A673 (cell line): ENCODE measurements at regions of chr10 and their contacts with region 1.

Region 1: DNA sequence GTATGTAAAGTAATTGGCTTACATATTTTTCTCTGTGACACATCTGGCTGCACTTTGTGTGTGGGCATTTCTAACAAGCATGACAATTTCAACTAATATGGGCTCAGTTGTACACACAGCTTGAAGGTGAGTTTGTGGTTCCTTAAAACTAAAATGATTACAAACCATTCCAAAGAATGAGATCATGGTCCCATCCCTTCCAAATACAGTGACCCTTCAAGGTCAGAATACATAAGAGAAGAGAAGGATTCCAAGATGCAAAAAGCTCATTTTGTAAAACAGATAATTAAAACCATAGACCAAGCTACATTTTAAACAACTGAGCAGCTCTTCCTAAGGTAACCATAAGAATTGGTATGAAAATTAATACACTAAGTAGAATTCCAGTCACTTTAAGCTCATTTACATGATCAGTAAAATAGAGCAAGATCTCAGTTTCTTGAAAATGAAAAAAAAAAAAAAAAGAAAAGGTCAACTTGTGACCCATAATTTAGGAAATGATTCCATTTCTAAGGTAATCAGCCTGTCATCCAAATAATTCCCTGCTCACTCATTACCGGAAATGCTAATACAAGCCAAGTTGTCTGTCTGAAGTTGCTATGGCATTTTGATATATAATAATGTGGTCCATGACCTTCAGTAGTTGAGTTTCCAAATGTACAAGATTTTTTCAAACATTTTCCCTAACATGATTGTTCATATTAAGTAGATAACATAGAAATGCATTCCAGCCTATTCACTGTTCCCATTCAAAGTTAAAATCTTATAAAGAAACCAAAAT is 688.5 kb downstream of the PARD3 start:
- DNase-seq: no peak
- H3K4me3 ChIP-seq: no peak overlapping the region
- H3K27ac ChIP-seq: no peak overlapping the region
- H3K4me1 ChIP-seq: peaks cover 6% of the 10 kb centered on the region
- H3K27me3 ChIP-seq: no peaks in the 10 kb centered on the region
- CTCF ChIP-seq: no peak

Region 2: DNA sequence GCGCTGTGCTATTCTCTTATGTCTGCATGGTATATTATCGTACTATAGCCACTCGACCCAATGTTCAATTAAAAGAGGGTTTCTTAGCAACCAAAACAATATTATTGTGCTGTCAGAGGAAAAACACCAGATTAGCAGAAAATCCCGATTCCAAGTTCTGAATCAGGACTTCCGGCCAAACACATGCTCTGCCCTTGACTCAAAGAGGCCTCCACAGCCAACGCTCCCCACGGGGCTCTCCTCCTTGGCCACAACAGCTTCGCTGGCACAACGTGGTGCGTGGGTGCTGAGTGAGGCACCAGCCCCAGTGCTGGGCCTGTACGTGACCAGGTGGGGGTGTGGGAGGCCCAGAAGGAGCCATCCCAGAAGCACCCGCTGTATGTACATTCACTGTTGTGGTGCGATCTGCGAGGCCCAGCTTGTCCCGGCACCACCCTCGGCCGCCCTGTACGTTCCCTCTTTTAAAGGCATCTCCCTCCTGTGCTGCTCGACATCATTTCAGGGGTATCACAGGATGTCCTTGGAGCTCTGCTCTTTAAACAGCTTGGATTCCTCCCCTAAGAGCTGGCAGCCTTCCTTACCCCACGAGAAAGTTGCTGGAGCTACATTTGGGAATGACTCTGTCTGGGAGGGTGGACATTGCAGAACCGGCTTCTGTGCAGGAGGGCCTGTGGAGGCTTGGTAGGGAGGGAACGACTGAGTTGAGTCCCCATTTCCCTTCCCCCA is 47.7 kb before region 1 on chr10:
- CTCF ChIA-PET with region 1: interaction called, 10 read pairs
- POLR2A ChIA-PET with region 1: no interaction called
- intact Hi-C with region 1: no loop called
- DNase-seq: no peak
- H3K4me3 ChIP-seq: no peak overlapping the region
- H3K27ac ChIP-seq: no peak overlapping the region
- H3K4me1 ChIP-seq: no peaks in the 10 kb centered on the region
- H3K27me3 ChIP-seq: no peaks in the 10 kb centered on the region
- CTCF ChIP-seq: no peak